Psoas muscle (tissue), 8 donors: ENCODE measurements at regions of chr2 and their contacts with region 1.

Region 1: GRCh38 chr2:85314884-85315242 is 12.9 kb downstream of the TGOLN2 start:
- DNase-seq: no peak
- ATAC-seq: no peak
- H3K4me3 ChIP-seq: no peak overlapping the region
- H3K27ac ChIP-seq: no peak overlapping the region
- H3K4me1 ChIP-seq: peaks cover 7% of the 10 kb centered on the region
- H3K27me3 ChIP-seq: no peaks in the 10 kb centered on the region
- CTCF ChIP-seq: no peak

Region 2: GRCh38 chr2:85340034-85340892 is 25.4 kb after region 1 on chr2:
- intact Hi-C with region 1: loop called in 1 of 2 experiments (anchors 1 kb)
- DNase-seq: no peak
- ATAC-seq: peak; percentile 40 to 57 (median 48)
- H3K4me3 ChIP-seq: no peak overlapping the region
- H3K27ac ChIP-seq: no peak overlapping the region
- H3K4me1 ChIP-seq: peaks cover 5% of the 10 kb centered on the region
- H3K27me3 ChIP-seq: no peaks in the 10 kb centered on the region
- CTCF ChIP-seq: no peak